ENCODE measurements at regions of chr11 and their contacts with region 1.

Region 1: DNA sequence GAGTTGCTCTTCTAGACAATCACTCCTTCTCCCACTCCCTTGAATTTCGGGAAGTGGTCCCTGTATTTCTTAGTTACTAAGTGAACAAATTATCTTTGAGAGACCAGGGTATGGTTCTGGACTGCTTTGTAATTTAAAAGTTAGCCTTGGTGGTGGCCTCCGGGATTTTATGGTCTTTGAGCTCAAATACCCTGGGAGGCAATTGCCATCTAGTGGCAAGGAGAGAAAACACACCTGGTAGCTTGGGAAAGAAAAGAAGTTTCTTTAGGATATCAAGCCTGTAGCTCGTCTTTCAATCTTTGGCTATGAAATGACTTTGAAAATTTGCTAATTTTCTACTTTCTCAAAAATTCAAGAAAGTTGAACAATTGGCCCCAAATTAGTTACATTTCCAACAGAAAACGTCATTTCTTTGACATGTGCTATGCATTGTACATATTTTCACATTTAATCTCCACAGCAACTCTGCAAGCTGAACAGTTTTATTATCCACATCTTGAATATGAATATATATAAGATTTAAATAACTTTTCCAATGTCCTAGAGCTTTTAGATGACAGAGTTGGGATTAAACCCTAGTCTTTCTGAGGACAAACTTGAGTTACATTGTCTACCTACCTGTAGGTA is 39.1 kb downstream of the MMP27 start:
- DNase-seq: no peak
- ATAC-seq: peak; percentile 85 to 89 (median 87)
- H3K4me3 ChIP-seq: no peak overlapping the region
- H3K27ac ChIP-seq: no peak overlapping the region
- H3K4me1 ChIP-seq: no peaks in the 10 kb centered on the region
- H3K27me3 ChIP-seq: no peaks in the 10 kb centered on the region
- CTCF ChIP-seq: peak; percentile 79 to 92 (median 84)
- POLR2A ChIP-seq: no peak

Region 2: GRCh38 chr11:102546923-102547471 is 119.4 kb before region 1 on chr11:
- intact Hi-C with region 1: no loop called
- DNase-seq: no peak
- ATAC-seq: peak in 2 of 4 donors; percentile 23 to 30
- H3K4me3 ChIP-seq: no peak overlapping the region
- H3K27ac ChIP-seq: no peak overlapping the region
- H3K4me1 ChIP-seq: no peaks in the 10 kb centered on the region
- H3K27me3 ChIP-seq: no peaks in the 10 kb centered on the region
- CTCF ChIP-seq: no peak
- POLR2A ChIP-seq: no peak

Region 3: GRCh38 chr11:102599642-102600261 is 66.7 kb before region 1 on chr11:
- intact Hi-C with region 1: loop called in 1 of 2 experiments (anchors 10 kb)
- DNase-seq: no peak
- ATAC-seq: peak in 2 of 4 donors; percentile 17 to 90
- H3K4me3 ChIP-seq: no peak overlapping the region
- H3K27ac ChIP-seq: no peak overlapping the region
- H3K4me1 ChIP-seq: no peaks in the 10 kb centered on the region
- H3K27me3 ChIP-seq: no peaks in the 10 kb centered on the region
- CTCF ChIP-seq: no peak
- POLR2A ChIP-seq: no peak